Upper lobe of right lung (tissue), 1 donor: ENCODE measurements at regions of chr9 and their contacts with region 1.

Region 1: DNA sequence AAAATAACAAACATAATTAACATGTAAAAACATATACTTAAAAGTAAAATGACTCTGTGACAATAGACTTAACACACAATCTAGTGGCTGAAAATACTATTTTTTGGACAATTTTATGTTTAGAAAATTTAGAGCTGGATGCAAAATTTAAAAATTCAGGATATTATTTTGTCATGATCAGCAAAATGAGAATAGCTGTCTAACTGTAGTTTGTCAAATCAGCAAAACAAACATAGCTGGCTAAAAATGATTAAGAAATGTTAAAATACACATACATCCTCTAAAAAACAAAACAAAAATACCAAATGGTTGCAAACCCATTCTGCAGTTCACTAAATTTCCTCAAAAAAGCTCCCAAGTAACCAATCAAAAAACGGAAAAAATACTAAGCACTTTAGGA is 18.6 kb downstream of the C9orf72 start:
- DNase-seq: no peak
- ATAC-seq: no peak
- H3K4me3 ChIP-seq: no peak overlapping the region
- H3K27ac ChIP-seq: no peak overlapping the region
- H3K4me1 ChIP-seq: no peaks in the 10 kb centered on the region
- H3K27me3 ChIP-seq: no peaks in the 10 kb centered on the region
- CTCF ChIP-seq: no peak

Region 2: GRCh38 chr9:27337833-27338526 is 216.7 kb before region 1 on chr9:
- intact Hi-C with region 1: loop called (anchors 5 kb)
- DNase-seq: peak; percentile 71
- ATAC-seq: peak; percentile 73
- H3K4me3 ChIP-seq: no peak overlapping the region
- H3K27ac ChIP-seq: peak overlapping the region; percentile 82
- H3K4me1 ChIP-seq: peaks cover 43% of the 10 kb centered on the region
- H3K27me3 ChIP-seq: no peaks in the 10 kb centered on the region
- CTCF ChIP-seq: no peak

Region 3: GRCh38 chr9:27600256-27600655 is 45.5 kb after region 1 on chr9:
- intact Hi-C with region 1: no loop called
- DNase-seq: no peak
- ATAC-seq: peak; percentile 75
- H3K4me3 ChIP-seq: no peak overlapping the region
- H3K27ac ChIP-seq: peak overlapping the region; percentile 71
- H3K4me1 ChIP-seq: peaks cover 4% of the 10 kb centered on the region
- H3K27me3 ChIP-seq: no peaks in the 10 kb centered on the region
- CTCF ChIP-seq: no peak

Region 4: DNA sequence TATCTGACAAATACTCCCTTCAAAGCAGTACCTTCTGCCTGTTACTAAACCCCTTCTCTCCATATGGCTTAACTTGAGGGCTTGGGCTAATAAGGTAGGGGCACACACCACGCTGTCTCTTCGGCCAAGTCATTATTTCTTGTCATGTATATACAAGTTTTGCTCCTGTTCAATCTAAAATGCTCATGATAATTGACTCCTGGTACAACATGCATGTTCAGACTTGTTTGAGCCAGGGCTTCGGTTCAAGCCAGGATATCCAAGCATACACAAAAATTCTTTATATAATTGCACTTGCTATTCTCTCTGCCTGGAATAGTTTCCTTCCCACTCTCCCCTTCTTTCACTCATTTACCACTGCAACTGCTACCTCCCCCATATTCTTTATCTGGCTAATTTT is 774.6 kb after region 1 on chr9:
- intact Hi-C with region 1: no loop called
- DNase-seq: no peak
- ATAC-seq: no peak
- H3K4me3 ChIP-seq: no peak overlapping the region
- H3K27ac ChIP-seq: no peak overlapping the region
- H3K4me1 ChIP-seq: no peaks in the 10 kb centered on the region
- H3K27me3 ChIP-seq: no peaks in the 10 kb centered on the region
- CTCF ChIP-seq: no peak